ENCODE measurements at regions of chr2 and their contacts with region 1.

Region 1: DNA sequence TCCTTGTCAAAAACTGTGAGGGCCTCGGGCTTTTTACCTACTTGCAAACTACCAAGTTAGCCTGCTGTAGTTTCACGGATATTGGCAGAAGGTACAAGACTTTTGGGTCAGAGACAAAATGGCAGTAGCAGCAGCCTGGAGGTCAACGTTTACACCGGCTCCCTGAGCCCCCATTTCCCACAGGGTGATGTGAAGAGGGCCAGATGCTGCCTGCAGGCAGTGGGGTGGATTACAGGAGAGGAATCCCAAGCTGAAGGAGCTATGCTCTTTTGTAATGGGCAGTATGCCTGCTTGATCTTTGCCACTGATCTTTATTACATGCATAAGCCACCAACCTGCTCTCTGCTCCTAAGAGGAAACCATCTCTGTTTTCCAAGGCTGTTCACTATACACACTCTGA is 29.5 kb upstream of the SP5 start:
- DNase-seq: no peak
- ATAC-seq: no peak

Region 2: GRCh38 chr2:170396799-170397459 is 288.7 kb before region 1 on chr2:
- intact Hi-C with region 1: loop called in 1 of 2 experiments (anchors 5 kb)
- DNase-seq: no peak
- ATAC-seq: no peak

Region 3: GRCh38 chr2:171185941-171186340 is 500.4 kb after region 1 on chr2:
- intact Hi-C with region 1: no loop called
- DNase-seq: no peak
- ATAC-seq: no peak

Measured in left cardiac atrium (tissue), 4 donors.